Tibial artery (tissue), 4 donors: ENCODE measurements at regions of chr13 and their contacts with region 1.

Region 1: DNA sequence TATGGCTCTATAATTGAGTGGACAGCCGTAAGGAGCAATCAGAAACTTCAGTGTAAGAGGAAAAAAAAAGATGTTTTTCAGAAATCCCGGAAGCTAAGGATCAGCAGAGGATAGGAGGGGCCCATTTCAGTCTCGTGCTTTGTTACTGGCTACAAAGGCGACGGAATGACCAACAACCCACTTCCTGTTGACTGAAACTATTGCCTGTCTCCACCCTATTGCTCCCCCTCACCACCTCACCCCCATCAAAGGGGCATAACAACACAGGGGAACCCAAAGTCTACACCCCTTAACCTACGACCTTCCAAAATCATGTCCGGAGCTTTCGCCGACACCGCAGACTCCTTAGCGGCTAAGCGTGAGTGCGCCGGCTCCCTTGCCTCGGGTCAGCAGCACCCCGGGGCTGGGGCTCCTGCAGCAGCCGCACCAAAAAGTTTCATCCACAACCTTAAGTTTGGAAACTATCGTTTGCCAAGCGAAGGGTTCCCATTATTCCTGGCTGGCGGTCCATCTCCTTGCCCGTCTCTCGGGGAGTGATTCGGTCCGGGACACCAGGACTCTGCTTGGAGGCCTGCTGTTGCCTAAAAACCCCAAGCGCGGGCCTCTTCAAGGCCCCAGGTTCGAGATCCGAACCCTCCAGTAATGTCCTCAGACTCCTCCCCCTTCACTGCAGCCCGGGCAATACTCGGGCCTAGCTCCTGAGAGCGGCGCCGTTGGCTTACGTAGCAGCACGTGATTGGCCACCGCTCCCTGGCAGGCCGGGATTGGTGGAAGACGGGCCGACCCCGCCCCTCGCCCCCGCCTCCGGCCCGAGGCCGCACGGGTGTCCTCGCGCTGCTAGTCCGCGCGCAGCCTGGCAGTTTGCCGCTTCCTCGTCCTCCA is at the start of gene TPP2:
- DNase-seq: peak; percentile 98 to 99
- H3K4me3 ChIP-seq: peak within 1 kb of the TSS; percentile 92 to 95
- H3K27ac ChIP-seq: peak within 1 kb of the TSS; percentile 99
- H3K4me1 ChIP-seq: peaks cover 0 to 40% (median 20%) of the 10 kb centered on the region in 4 donors
- H3K27me3 ChIP-seq: no peaks in the 10 kb centered on the region
- CTCF ChIP-seq: no peak

Region 2: DNA sequence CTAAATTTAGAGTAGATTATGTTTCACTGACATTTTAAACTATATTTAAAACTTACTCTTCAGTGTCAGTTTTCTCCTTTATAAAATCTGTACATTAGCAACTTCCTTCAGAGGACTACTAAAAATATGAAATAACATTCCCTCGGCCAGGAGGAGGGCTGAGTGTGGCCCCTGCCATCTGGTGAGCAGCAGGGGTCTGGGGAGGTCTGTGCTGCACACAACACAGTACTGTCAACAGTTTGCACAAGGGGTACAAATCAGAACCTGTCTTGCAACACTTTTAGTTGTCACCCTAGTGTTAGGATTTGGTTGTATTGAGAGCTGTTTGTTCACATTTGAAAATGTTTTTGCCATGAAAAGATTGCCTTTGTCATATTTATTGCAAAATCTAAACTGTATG is 49.3 kb after region 1 on chr13:
- intact Hi-C with region 1: loop called (anchors 5 kb)
- DNase-seq: no peak
- H3K4me3 ChIP-seq: no peak overlapping the region
- H3K27ac ChIP-seq: no peak overlapping the region
- H3K4me1 ChIP-seq: peaks cover 0 to 13% (median 4%) of the 10 kb centered on the region in 4 donors
- H3K27me3 ChIP-seq: no peaks in the 10 kb centered on the region
- CTCF ChIP-seq: no peak

Region 3: GRCh38 chr13:102798581-102799425 is 202.4 kb after region 1 on chr13 and contains the starts of genes BIVM and POGLUT2:
- intact Hi-C with region 1: loop called (anchors 5 kb)
- DNase-seq: peak; percentile 92 to 94
- H3K4me3 ChIP-seq: peak within 1 kb of the TSS; percentile 66 to 73
- H3K27ac ChIP-seq: peak within 1 kb of the TSS; percentile 72 to 87
- H3K4me1 ChIP-seq: peaks cover 0 to 27% (median 7%) of the 10 kb centered on the region in 4 donors
- H3K27me3 ChIP-seq: no peaks in the 10 kb centered on the region
- CTCF ChIP-seq: no peak

Region 4: GRCh38 chr13:102845630-102846260 is 249.4 kb after region 1 on chr13 and contains the start of gene ERCC5:
- intact Hi-C with region 1: loop called (anchors 2 kb)
- DNase-seq: peak; percentile 91 to 94
- H3K4me3 ChIP-seq: peak within 1 kb of the TSS; percentile 66 to 88
- H3K27ac ChIP-seq: peak within 1 kb of the TSS; percentile 84 to 95
- H3K4me1 ChIP-seq: peaks cover 0 to 20% (median 12%) of the 10 kb centered on the region in 4 donors
- H3K27me3 ChIP-seq: no peaks in the 10 kb centered on the region
- CTCF ChIP-seq: no peak